IMR-90 (cell line): ENCODE measurements at regions of chr4 and their contacts with region 1.

Region 1: GRCh38 chr4:139560406-139561104 is 4.5 kb upstream of the SETD7 start:
- DNase-seq: no peak
- ATAC-seq: no peak
- H3K4me3 ChIP-seq: no peak overlapping the region
- H3K27ac ChIP-seq: no peak overlapping the region
- H3K4me1 ChIP-seq: peaks cover 2% of the 10 kb centered on the region
- H3K27me3 ChIP-seq: peaks cover 20% of the 10 kb centered on the region
- CTCF ChIP-seq: no peak
- POLR2A ChIP-seq: no peak
- RAD21 ChIP-seq: no peak

Region 2: GRCh38 chr4:139208404-139208945 is 352.1 kb before region 1 on chr4:
- CTCF ChIA-PET with region 1: no interaction called
- POLR2A ChIA-PET with region 1: no interaction called
- dilution Hi-C with region 1: no loop called
- in situ Hi-C with region 1: no loop called
- intact Hi-C with region 1: loop called (anchors 10 kb)
- DNase-seq: peak; percentile 91
- ATAC-seq: peak; percentile 40
- H3K4me3 ChIP-seq: no peak overlapping the region
- H3K27ac ChIP-seq: peak overlapping the region; percentile 22; the same call in 1 of the 2 replicates
- H3K4me1 ChIP-seq: 0 out of 2 replicates have a peak, but pooled peaks cover 2% of the 10 kb centered on the region
- H3K27me3 ChIP-seq: no peaks in the 10 kb centered on the region
- CTCF ChIP-seq: no peak
- POLR2A ChIP-seq: no peak
- RAD21 ChIP-seq: no peak

Region 3: GRCh38 chr4:139433716-139434115 is 126.8 kb before region 1 on chr4:
- CTCF ChIA-PET with region 1: no interaction called
- POLR2A ChIA-PET with region 1: no interaction called
- dilution Hi-C with region 1: no loop called
- in situ Hi-C with region 1: no loop called
- intact Hi-C with region 1: no loop called
- DNase-seq: no peak
- ATAC-seq: no peak
- H3K4me3 ChIP-seq: no peak overlapping the region
- H3K27ac ChIP-seq: no peak overlapping the region
- H3K4me1 ChIP-seq: no peaks in the 10 kb centered on the region
- H3K27me3 ChIP-seq: no peaks in the 10 kb centered on the region
- CTCF ChIP-seq: no peak
- POLR2A ChIP-seq: no peak
- RAD21 ChIP-seq: no peak

Region 4: GRCh38 chr4:139887962-139888735 is 327.6 kb after region 1 on chr4:
- CTCF ChIA-PET with region 1: no interaction called
- POLR2A ChIA-PET with region 1: no interaction called
- dilution Hi-C with region 1: no loop called
- in situ Hi-C with region 1: no loop called
- intact Hi-C with region 1: no loop called
- DNase-seq: no peak
- ATAC-seq: peak; percentile 44
- H3K4me3 ChIP-seq: no peak overlapping the region
- H3K27ac ChIP-seq: no peak overlapping the region
- H3K4me1 ChIP-seq: peaks cover 11% of the 10 kb centered on the region
- H3K27me3 ChIP-seq: no peaks in the 10 kb centered on the region
- CTCF ChIP-seq: no peak
- POLR2A ChIP-seq: no peak
- RAD21 ChIP-seq: no peak